Left cardiac atrium (tissue), 4 donors: ENCODE measurements at regions of chr5 and their contacts with region 1.

Region 1: GRCh38 chr5:157718519-157718918 is 12.7 kb upstream of the THG1L start:
- DNase-seq: no peak
- ATAC-seq: peak; percentile 87 to 93

Region 2: GRCh38 chr5:157342822-157343402 is 375.6 kb before region 1 on chr5:
- intact Hi-C with region 1: loop called in 1 of 2 experiments (anchors 10 kb)
- DNase-seq: peak; percentile 31
- ATAC-seq: peak in 1 of 2 donors; percentile 42

Region 3: GRCh38 chr5:157431544-157432200 is 286.8 kb before region 1 on chr5:
- intact Hi-C with region 1: loop called (anchors 5 to 10 kb)
- DNase-seq: no peak
- ATAC-seq: peak; percentile 76 to 85

Region 4: GRCh38 chr5:157665467-157666100 is 52.9 kb before region 1 on chr5:
- intact Hi-C with region 1: loop called (anchors 2 to 10 kb)
- DNase-seq: no peak
- ATAC-seq: no peak

Region 5: DNA sequence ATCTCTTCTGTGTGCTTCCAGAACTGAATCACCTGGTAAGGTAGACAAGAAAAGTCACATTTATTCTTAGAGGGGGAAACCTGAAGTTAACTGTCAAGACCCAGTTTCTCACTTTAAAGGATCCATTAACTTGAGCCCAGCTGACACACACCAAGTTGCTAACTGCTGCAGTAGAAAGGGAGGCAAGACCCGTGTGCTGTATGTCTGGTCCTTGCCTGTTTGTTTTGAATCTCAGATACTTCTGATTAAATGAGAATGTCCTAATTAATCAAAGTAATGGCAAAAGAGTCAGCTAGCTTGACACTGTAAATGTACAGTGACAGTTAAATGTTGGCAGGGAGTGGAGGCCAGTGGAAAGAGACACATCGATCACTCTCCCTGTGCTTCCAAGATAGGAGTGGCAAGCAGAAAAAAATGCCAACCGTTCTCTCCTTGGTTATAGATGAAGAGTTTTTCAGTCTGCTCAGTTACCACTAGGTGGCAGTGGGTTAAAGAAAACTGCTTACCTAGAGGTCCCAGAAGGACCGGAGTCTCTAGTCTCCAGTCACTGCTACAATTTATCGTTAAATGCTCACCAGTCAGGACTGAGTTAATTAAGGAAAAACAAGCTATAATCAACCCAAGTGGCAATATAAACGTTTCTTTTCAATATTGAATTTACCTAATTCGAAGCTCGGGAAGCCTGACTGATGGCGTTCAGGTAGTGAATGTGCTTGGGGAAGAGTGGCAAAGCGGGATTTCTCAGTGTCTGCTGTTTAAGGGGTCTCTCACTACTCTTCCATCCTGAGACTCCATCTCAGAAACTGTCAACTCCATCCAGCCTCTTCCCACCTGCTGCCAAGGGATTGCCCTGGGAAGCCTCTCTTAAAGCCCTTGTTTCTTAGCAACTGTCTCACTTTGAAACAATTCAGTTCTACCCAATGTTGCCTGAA is 43.4 kb after region 1 on chr5:
- intact Hi-C with region 1: no loop called
- DNase-seq: no peak
- ATAC-seq: peak; percentile 78 to 86

Region 6: GRCh38 chr5:157971571-157972216 is 253.2 kb after region 1 on chr5:
- intact Hi-C with region 1: no loop called
- DNase-seq: no peak
- ATAC-seq: peak; percentile 82 to 90